ENCODE measurements at regions of chr1 and their contacts with region 1.

Region 1: DNA sequence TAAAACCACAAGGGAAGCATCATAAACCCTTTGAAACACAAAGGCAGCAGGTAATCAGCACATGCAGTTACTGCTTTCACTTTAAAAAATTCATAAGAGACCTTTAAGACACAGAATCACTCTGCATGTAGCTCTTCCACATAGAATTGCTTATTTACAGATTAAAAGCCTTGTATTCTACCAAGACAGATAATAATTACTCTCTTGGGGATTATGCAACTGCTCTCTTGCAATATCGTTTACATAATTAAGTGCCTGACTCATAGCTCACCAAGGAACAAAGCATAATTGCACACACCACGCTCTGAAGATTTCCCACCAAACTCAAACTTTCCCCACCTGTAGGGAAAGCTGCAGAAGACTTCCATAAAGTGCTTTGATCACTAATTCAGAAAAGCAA is 87.9 kb downstream of the VAV3 start:
- DNase-seq: no peak
- ATAC-seq: peak in 2 of 4 donors; percentile 56 to 69
- H3K4me3 ChIP-seq: no peak overlapping the region
- H3K27ac ChIP-seq: peak overlapping the region in 1 of 12 donors; percentile 62
- H3K4me1 ChIP-seq: peaks cover 0 to 52% (median 0%) of the 10 kb centered on the region in 12 donors
- H3K27me3 ChIP-seq: no peaks in the 10 kb centered on the region
- CTCF ChIP-seq: no peak
- POLR2A ChIP-seq: no peak

Region 2: DNA sequence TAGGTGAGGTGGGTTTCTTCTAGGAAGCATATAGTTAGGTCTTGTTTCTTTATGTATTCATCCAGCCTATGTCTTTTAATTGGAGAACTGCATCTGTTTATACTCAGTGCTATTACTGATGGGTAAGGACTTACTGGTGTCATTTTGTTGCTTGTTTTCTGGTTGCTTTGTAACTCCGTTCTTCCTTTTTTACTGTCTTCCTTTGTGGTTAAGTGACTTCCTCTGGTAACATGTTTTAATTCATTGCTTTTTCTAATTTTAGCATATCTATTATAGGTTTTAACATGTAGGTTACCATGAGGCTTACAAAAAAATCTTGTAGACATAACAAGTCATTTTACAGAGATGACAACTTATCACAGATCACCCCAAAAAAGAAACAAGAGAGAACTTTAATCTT is 73.0 kb before region 1 on chr1:
- intact Hi-C with region 1: loop called in 1 of 10 experiments (anchors 10 kb)
- DNase-seq: no peak
- ATAC-seq: no peak
- H3K4me3 ChIP-seq: no peak overlapping the region
- H3K27ac ChIP-seq: no peak overlapping the region
- H3K4me1 ChIP-seq: peaks cover 0 to 23% (median 0%) of the 10 kb centered on the region in 12 donors
- H3K27me3 ChIP-seq: no peaks in the 10 kb centered on the region
- CTCF ChIP-seq: no peak
- POLR2A ChIP-seq: no peak

Region 3: DNA sequence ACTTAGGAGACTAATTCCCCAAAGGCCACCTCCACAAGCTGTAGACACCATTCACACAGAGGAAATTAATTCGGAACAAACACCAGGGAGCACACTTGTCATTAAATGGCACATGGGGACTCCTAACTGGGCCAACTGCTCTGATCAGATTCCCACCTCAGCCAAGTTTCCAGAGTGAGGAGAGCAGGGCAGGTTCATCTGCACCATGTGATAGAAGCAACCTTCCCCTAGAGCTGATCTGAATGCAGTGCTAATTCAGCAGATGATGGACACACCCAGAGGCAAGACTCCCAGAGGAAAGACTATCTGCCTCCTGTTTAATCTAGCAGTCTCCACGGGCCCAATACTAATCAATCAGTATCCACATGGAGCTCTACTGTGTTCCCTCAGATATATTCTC is 59.2 kb before region 1 on chr1:
- intact Hi-C with region 1: loop called in 1 of 10 experiments (anchors 10 kb)
- DNase-seq: no peak
- ATAC-seq: peak in 2 of 4 donors; percentile 27 to 32
- H3K4me3 ChIP-seq: no peak overlapping the region
- H3K27ac ChIP-seq: no peak overlapping the region
- H3K4me1 ChIP-seq: peaks cover 0 to 10% (median 0%) of the 10 kb centered on the region in 12 donors
- H3K27me3 ChIP-seq: no peaks in the 10 kb centered on the region
- CTCF ChIP-seq: no peak
- POLR2A ChIP-seq: no peak

Region 4: DNA sequence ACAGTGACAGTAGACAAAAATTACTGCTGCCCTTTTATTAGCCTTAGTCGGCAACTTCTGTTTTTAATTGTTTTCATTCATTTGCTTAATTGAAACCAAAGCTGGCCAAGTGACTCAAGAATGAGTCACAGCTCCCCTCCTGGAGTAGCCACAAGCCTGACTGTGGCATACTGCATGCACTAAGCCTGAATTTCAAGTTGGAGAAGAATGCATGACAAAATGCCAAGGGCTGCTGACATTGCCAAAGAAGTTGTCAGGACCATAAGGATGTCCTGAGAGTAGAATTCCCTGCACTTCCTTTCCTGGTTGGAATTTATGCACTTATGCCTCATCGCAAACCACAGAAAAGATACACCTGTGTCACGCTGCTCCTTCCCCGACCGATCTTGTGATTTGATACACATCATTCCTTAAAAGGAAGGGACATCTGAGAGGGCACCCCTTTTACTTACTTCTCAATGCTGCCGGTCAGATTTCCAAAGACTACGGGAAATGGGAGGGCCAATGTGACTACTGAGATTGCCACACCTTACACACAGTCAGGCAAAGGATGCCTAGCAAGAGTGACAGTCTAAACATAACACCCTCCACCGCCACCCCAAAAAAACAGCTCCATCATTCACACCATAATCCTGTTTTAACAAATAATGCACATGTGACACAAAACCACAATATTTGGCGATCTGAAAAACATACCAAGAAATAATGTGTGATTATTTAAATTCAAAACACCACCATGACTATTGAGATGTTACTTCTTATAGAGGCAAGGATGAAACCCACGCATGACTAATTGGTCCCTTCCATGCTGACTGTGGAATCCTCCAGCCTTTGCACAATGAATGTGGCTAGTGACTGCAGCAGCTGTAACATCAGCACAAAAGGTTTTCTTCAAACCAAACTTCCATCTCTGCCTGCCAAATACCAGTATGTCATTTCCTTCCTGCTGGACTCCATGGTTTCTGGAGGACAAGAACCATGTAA is 59.7 kb after region 1 on chr1:
- intact Hi-C with region 1: no loop called
- DNase-seq: peak in 4 of 5 donors; percentile 33 to 53 (median 38)
- ATAC-seq: peak; percentile 47 to 88 (median 82)
- H3K4me3 ChIP-seq: peak overlapping the region in 1 of 12 donors; percentile 20
- H3K27ac ChIP-seq: peak overlapping the region in 10 of 12 donors; percentile 30 to 70 (median 50)
- H3K4me1 ChIP-seq: peaks cover 0 to 83% (median 12%) of the 10 kb centered on the region in 12 donors
- H3K27me3 ChIP-seq: no peaks in the 10 kb centered on the region
- CTCF ChIP-seq: no peak
- POLR2A ChIP-seq: no peak

Measured in heart left ventricle (tissue), 16 donors.